ENCODE measurements at regions of chr14 and their contacts with region 1.

Region 1: GRCh38 chr14:75427482-75428229 is at the start of gene JDP2:
- DNase-seq: peak; percentile 96 to 97
- ATAC-seq: peak; percentile 91 to 95 (median 93)
- H3K4me3 ChIP-seq: peak within 1 kb of the TSS; percentile 69 to 90 (median 78)
- H3K27ac ChIP-seq: peak within 1 kb of the TSS; percentile 81 to 98 (median 94)
- H3K4me1 ChIP-seq: peaks cover 20 to 64% (median 43%) of the 10 kb centered on the region in 9 donors
- H3K27me3 ChIP-seq: no peaks in the 10 kb centered on the region
- CTCF ChIP-seq: peak in 5 of 9 donors; percentile 13 to 53 (median 35)
- total RNA-seq, gene JDP2: 12.3 to 28.0 (median 17.3) TPM

Region 2: DNA sequence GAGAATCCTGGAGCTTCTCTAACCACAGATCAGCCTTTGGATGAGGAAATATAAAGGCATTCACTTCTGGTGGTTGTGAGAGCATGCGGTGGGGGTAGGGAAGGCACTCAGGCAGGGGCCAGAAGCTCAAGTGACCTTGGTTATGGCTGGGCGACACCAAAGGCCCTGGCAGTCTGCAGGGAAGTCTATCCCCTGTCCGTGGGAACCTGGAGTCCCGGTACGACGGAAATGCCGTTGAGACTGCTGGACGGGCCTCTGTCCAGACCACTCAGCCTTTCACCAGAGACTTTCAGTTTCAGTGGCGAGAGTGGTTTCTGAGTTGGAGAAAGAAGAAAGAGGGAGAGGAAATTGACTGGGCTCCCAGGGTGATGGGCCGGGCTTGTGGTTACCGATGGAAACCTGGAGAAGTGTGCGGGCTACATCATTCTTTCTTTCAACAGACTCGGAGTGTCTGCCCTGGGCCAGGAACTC is 913.1 kb before region 1 on chr14:
- intact Hi-C with region 1: no loop called
- DNase-seq: no peak
- ATAC-seq: peak in 3 of 8 donors; percentile 12 to 58 (median 20)
- H3K4me3 ChIP-seq: no peak overlapping the region
- H3K27ac ChIP-seq: peak overlapping the region in 4 of 10 donors; percentile 15 to 60 (median 53)
- H3K4me1 ChIP-seq: peaks cover 0 to 21% (median 0%) of the 10 kb centered on the region in 9 donors
- H3K27me3 ChIP-seq: peaks cover 0 to 5% (median 0%) of the 10 kb centered on the region in 7 donors
- CTCF ChIP-seq: no peak

Region 3: DNA sequence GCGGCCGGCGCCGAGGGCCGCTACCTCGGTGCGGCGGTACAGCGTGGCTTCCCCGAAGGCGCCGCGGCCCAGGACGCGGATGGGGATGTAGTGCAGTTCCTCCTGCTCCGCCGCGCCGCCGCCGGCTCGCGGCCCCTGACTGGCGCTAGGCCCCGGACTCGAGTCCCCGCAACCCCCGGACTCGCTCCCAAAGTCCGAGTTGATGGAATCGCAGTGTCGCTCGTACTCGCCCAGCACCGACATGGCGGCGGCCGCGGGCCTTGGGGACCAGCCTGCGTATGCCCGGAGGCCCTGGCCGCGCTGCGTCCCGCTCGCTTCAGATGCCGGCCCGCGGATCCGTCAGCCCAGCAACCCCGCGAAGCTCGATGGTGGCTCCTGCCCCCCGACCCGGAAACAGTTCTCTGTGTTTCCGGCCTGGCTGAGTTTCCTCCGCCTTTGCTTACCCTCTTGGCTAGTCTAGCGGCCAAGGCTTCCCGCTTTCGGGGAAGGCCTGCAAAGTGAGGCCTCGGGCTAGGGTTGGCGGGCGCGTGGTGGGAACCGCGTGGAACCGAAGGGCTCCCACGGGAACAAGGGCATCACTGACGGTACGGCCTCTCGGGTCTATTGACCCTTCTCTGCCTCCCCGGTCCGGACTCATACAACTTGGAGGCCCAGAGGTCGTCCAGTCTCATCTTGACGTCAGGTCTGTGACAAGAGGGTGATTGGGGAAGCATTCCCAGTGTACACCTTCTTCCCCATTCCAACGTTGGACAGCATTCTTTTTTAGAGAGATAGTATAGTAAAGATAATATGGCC is 300.8 kb before region 1 on chr14 and contains the start of gene NEK9:
- intact Hi-C with region 1: loop called in 1 of 10 experiments (anchors 5 kb)
- DNase-seq: peak; percentile 91 to 94
- ATAC-seq: peak; percentile 95 to 98 (median 96)
- H3K4me3 ChIP-seq: peak within 1 kb of the TSS; percentile 63 to 96 (median 84)
- H3K27ac ChIP-seq: peak within 1 kb of the TSS; percentile 90 to 99 (median 96)
- H3K4me1 ChIP-seq: peaks cover 0 to 54% (median 41%) of the 10 kb centered on the region in 9 donors
- H3K27me3 ChIP-seq: no peaks in the 10 kb centered on the region
- CTCF ChIP-seq: peak in 1 of 9 donors; percentile 13
- total RNA-seq, gene NEK9: 97.8 to 138 (median 115) TPM

Region 4: DNA sequence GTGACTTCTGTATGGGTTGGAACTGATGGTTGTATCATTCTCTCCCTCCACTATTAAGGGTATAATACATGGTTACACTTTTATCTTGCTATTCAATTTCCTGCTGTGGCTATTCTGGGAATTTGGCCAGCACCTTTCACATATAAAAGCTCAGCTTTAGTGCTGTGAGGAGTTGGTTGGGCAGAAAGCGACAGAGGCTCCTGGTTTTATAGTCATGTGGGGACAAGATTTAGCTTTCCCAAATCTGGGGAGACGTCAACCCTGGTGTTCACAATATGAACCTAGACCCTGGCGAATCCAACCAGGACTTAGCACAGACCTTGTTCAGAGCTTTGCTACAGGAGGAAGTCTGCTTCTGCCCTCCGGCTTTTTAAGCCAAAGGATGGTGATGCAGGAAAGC is 112.5 kb before region 1 on chr14:
- intact Hi-C with region 1: loop called in 6 of 10 experiments (anchors 1 to 10 kb)
- DNase-seq: peak in 1 of 2 donors; percentile 58
- ATAC-seq: peak; percentile 9 to 52 (median 31)
- H3K4me3 ChIP-seq: peak overlapping the region in 3 of 10 donors; percentile 4 to 17 (median 15)
- H3K27ac ChIP-seq: peak overlapping the region in 5 of 10 donors; percentile 33 to 70 (median 55)
- H3K4me1 ChIP-seq: peaks cover 14 to 38% (median 30%) of the 10 kb centered on the region in 9 donors
- H3K27me3 ChIP-seq: no peaks in the 10 kb centered on the region
- CTCF ChIP-seq: no peak

Region 5: DNA sequence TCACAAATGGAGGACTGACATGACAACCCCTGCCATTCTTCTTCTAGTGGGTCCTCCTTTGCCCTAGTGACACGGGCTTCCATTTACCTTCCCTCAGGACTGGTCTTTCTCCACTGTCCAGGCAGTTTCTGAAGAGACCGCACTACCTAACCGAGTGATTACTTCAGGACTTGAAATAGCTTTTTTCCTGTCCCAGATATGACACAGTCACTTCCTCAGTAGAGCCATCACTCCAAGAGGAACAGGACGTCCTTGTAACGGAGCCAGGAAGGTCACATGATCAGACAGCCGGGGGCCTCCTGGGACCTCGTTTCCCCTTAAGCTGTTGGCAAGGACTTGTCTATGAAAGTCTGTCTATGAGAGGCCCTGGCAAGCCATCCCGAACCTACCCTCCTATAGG is 86.7 kb before region 1 on chr14:
- intact Hi-C with region 1: loop called in 2 of 10 experiments (anchors 1 to 5 kb)
- DNase-seq: peak; percentile 82 to 95
- ATAC-seq: peak; percentile 81 to 98 (median 96)
- H3K4me3 ChIP-seq: no peak overlapping the region
- H3K27ac ChIP-seq: peak overlapping the region; percentile 72 to 91 (median 84)
- H3K4me1 ChIP-seq: peaks cover 11 to 76% (median 38%) of the 10 kb centered on the region in 9 donors
- H3K27me3 ChIP-seq: no peaks in the 10 kb centered on the region
- CTCF ChIP-seq: no peak

Region 6: DNA sequence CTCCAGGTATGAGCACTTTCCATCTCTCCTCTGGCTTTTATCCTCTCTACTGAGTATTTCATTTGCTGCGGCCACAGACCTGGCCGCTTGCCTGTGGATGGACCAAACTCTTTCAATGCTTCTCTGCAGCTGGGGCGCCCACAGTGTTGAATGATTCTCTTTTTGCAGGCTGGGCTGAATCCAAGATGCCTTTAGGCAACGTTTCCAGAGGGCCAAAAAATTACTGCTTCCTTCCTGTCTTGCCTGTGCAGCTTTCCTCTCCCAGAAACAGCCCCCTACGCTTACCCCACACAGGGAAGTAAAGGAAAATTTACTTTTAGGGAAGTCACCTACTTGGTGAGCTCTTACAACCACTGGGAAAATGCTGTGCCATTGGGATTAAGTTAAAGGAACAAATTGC is 55.4 kb before region 1 on chr14:
- intact Hi-C with region 1: no loop called
- DNase-seq: peak in 1 of 2 donors; percentile 32
- ATAC-seq: peak in 5 of 8 donors; percentile 31 to 61 (median 52)
- H3K4me3 ChIP-seq: no peak overlapping the region
- H3K27ac ChIP-seq: peak overlapping the region in 2 of 10 donors; percentile 8 to 20
- H3K4me1 ChIP-seq: peaks cover 0 to 25% (median 3%) of the 10 kb centered on the region in 9 donors
- H3K27me3 ChIP-seq: no peaks in the 10 kb centered on the region
- CTCF ChIP-seq: no peak

Region 7: DNA sequence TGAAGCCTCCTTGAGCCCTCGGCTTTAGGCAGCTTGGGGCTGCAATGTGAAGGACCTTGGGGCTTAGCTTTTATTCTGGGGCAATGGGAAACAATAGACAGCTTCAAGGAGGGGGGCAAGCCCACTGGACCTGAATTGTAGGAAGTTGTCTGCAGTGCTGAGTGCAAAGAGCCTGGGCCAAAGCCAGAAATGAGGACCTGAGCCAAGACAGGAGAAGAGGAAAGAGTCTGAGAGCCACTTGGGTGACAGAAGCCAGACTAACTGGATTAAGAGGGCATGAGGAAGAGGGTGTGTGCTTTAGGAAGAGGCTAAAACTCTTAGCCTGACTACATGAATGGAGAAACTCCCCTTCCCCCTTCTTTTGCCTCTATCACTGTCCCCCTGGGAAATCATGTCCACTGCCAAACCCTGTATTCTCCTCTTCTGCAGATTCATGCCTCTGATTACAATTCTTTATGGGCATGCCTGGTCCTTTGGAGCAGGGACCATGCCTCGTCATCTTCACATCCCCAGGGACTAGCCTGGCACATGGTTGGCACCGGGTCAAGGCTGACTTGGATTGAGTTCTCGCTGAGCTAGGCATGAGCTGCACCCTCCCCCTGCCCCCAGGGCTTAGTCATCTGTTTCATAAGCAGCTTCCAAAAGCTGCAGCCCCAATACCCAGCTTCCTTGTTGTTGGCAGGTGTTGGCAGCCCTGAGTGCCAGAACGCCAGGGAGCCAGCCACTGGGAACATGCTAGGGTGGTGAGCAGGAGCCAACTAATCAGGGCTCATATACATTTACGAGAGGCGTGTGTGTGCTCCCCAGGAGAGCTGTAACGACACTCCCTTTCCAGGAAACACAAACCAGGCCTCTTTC is 27.6 kb before region 1 on chr14:
- intact Hi-C with region 1: loop called in 1 of 10 experiments (anchors 2 kb)
- DNase-seq: peak; percentile 86 to 89
- ATAC-seq: peak; percentile 86 to 97 (median 92)
- H3K4me3 ChIP-seq: no peak overlapping the region
- H3K27ac ChIP-seq: peak overlapping the region in 9 of 10 donors; percentile 55 to 80 (median 76)
- H3K4me1 ChIP-seq: peaks cover 14 to 30% (median 28%) of the 10 kb centered on the region in 9 donors
- H3K27me3 ChIP-seq: no peaks in the 10 kb centered on the region
- CTCF ChIP-seq: no peak

Region 8: GRCh38 chr14:75487155-75487671 is 59.6 kb after region 1 on chr14:
- intact Hi-C with region 1: loop called in 3 of 10 experiments (anchors 5 to 10 kb)
- DNase-seq: no peak
- ATAC-seq: no peak
- H3K4me3 ChIP-seq: no peak overlapping the region
- H3K27ac ChIP-seq: no peak overlapping the region
- H3K4me1 ChIP-seq: peaks cover 0 to 9% (median 0%) of the 10 kb centered on the region in 9 donors
- H3K27me3 ChIP-seq: no peaks in the 10 kb centered on the region
- CTCF ChIP-seq: no peak

Region 9: GRCh38 chr14:75654127-75654732 is 226.6 kb after region 1 on chr14:
- intact Hi-C with region 1: no loop called
- DNase-seq: peak; percentile 78 to 84
- ATAC-seq: peak; percentile 81 to 91 (median 85)
- H3K4me3 ChIP-seq: no peak overlapping the region
- H3K27ac ChIP-seq: no peak overlapping the region
- H3K4me1 ChIP-seq: peaks cover 0 to 19% (median 0%) of the 10 kb centered on the region in 9 donors
- H3K27me3 ChIP-seq: no peaks in the 10 kb centered on the region
- CTCF ChIP-seq: peak; percentile 92 to 99 (median 96)

Measured in heart right ventricle (tissue), 16 donors.